Testis (tissue), 5 donors: ENCODE measurements at regions of chr11 and their contacts with region 1.

Region 1: DNA sequence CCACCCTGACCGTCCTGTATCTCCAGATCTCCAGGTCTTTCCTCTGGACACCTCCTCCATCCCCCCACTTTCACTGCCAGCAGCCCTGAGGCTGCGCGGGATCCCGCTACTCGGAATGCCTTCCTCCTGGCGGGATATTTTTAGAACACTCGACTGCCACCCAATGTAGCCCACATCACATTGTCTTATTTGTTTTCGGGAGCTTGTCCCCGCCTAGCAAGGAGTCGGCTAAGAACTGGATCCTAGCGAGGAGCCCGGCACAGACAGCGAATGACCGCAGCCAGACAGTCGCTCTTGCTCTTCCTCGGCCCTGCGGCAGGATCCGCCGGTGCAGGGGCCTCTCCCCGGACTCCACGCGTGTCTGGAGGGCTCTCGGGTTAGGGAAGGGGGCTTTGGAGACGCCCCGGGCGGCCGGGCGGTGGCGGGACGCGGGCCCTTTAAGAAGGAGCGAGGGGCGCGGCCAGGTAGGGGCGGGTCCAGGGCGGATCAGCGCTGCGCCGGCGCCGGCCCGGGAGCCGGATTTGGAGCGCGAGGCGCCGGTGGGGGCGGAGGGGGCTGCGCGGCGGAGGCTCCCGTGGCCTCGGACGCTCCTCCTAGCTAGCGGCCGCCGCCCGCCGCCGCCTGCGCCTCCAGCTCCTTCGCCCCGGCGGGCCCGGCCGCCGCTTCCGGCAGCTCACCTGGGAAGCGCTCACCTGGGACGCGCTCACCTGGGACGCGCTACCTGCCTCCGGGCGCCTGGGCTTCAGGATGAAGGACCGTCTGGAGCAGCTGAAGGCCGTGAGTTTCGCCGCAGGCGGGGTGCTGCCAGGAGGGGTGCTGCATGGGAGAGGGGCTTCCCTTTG is at the start of gene STX3:
- DNase-seq: peak; percentile 77
- H3K4me3 ChIP-seq: peak within 1 kb of the TSS; percentile 89 to 92
- H3K27ac ChIP-seq: peak within 1 kb of the TSS; percentile 87 to 92
- H3K4me1 ChIP-seq: peaks cover 8% of the 10 kb centered on the region
- H3K27me3 ChIP-seq: no peaks in the 10 kb centered on the region
- CTCF ChIP-seq: peak in 1 of 3 experiments; percentile 16
- POLR2A ChIP-seq: no peak
- total RNA-seq, gene STX3: 94.3 to 103 TPM

Region 2: GRCh38 chr11:59802639-59803176 is 47.6 kb after region 1 on chr11:
- intact Hi-C with region 1: loop called (anchors 5 kb)
- DNase-seq: peak; percentile 41
- H3K4me3 ChIP-seq: no peak overlapping the region
- H3K27ac ChIP-seq: no peak overlapping the region
- H3K4me1 ChIP-seq: no peaks in the 10 kb centered on the region
- H3K27me3 ChIP-seq: no peaks in the 10 kb centered on the region
- CTCF ChIP-seq: peak; percentile 49 to 65 (median 59)
- POLR2A ChIP-seq: no peak